ENCODE measurements at regions of chr3 and their contacts with region 1.

Region 1: GRCh38 chr3:27666708-27667107 is 55.4 kb downstream of the EOMES start:
- H3K4me3 Mint-ChIP-seq: peak overlapping the region; percentile 50
- H3K27ac Mint-ChIP-seq: peak overlapping the region; percentile 93
- H3K4me1 Mint-ChIP-seq: peaks cover 49% of the 10 kb centered on the region
- H3K27me3 Mint-ChIP-seq: no peaks in the 10 kb centered on the region

Region 2: DNA sequence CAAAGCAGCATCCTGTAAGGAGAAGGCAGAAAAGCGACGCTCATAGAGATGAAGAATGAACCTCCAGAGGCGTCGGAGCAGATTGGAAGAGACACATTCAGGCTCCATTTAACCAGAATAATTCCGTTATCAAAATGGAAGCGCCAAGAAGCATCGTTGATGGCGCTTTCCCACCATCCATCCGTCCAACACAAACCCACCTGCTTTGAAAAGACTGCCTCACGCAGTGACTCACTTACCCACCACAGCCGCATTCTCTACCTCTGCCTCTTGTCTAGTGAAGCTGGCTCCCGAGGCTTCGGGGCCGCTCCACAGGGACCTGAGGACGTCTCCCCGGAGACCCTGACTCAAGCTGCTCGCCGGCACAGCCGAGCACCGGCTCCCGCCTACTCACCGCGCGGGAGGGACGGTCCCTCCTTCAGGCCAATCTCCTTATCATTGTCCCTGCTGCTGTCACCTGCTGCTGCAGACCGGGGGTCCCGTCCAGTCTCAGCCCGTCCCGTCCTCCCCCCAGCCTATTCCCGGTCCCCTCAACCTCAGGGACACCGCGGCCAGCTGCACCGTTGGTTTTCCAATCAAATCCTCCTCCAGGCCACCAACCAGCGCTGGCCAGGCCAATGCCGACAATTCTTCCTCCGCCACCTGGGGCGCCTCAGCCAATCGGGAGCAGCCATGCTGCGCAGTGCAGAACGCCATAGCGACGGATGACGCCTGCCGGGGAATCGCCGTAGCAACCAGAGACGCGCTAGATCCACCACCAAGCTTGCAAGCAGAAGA is 297.7 kb before region 1 on chr3 and contains the start of gene NEK10:
- intact Hi-C with region 1: loop called (anchors 5 kb)
- H3K4me3 Mint-ChIP-seq: peak within 1 kb of the TSS; percentile 93
- H3K27ac Mint-ChIP-seq: no peak within 1 kb of the TSS
- H3K4me1 Mint-ChIP-seq: peaks cover 12% of the 10 kb centered on the region
- H3K27me3 Mint-ChIP-seq: peaks cover 14% of the 10 kb centered on the region

Region 3: GRCh38 chr3:27484015-27484844 is 182.5 kb before region 1 on chr3 and contains the start of gene SLC4A7:
- intact Hi-C with region 1: loop called (anchors 2 kb)
- H3K4me3 Mint-ChIP-seq: peak within 1 kb of the TSS; percentile 95
- H3K27ac Mint-ChIP-seq: peak within 1 kb of the TSS; percentile 96
- H3K4me1 Mint-ChIP-seq: peaks cover 18% of the 10 kb centered on the region
- H3K27me3 Mint-ChIP-seq: no peaks in the 10 kb centered on the region

Region 4: GRCh38 chr3:27590437-27591298 is 76.0 kb before region 1 on chr3:
- intact Hi-C with region 1: loop called (anchors 5 kb)
- H3K4me3 Mint-ChIP-seq: peak overlapping the region; percentile 18
- H3K27ac Mint-ChIP-seq: peak overlapping the region; percentile 92
- H3K4me1 Mint-ChIP-seq: peaks cover 45% of the 10 kb centered on the region
- H3K27me3 Mint-ChIP-seq: no peaks in the 10 kb centered on the region

Measured in dendritic cell treated with granulocyte-macrophage colony-stimulating factor and Interleukin-4, amounts not matched to agents 40 ng/mL and 50 ng/mL, for 4 days (primary cell).